IMR-90 (cell line): ENCODE measurements at regions of chr4 and their contacts with region 1.

Region 1: GRCh38 chr4:126386512-126386911 is 1071.8 kb downstream of the FAT4 start:
- DNase-seq: no peak
- ATAC-seq: no peak
- H3K4me3 ChIP-seq: no peak overlapping the region
- H3K27ac ChIP-seq: no peak overlapping the region
- H3K4me1 ChIP-seq: no peaks in the 10 kb centered on the region
- H3K27me3 ChIP-seq: no peaks in the 10 kb centered on the region
- CTCF ChIP-seq: no peak
- POLR2A ChIP-seq: no peak
- RAD21 ChIP-seq: no peak

Region 2: DNA sequence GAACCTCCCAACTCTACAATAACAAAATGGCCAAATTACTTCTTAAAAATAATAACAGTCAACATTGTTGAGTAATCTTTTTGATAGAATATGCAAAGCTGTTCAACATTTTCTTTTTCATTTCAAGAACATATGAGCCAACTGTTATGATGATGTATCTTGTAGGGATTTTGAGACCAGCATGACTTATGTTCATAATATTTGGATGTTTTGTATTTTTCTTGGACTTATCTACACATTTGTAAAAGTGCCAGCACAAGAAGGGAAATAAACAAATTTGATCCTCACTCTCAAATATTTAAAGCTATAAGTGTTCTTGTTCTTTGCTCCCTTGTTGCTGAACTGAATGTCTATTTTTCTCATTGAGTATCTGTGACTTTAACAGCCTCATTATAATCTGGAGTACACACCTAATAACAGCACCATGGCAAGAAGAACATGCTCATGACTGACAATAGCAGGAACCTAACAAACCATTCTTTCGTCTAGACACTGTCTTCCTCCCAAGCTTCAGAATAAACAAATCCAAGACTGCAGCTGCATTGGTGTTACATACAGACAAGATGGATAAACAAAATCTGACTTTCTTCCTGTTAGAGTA is 22.1 kb before region 1 on chr4:
- CTCF ChIA-PET with region 1: no interaction called
- POLR2A ChIA-PET with region 1: no interaction called
- dilution Hi-C with region 1: no loop called
- in situ Hi-C with region 1: no loop called
- intact Hi-C with region 1: loop called (anchors 1 kb)
- DNase-seq: peak; percentile 77
- ATAC-seq: peak; percentile 78
- H3K4me3 ChIP-seq: no peak overlapping the region
- H3K27ac ChIP-seq: no peak overlapping the region
- H3K4me1 ChIP-seq: no peaks in the 10 kb centered on the region; the same call in 1 of the 2 replicates
- H3K27me3 ChIP-seq: no peaks in the 10 kb centered on the region
- CTCF ChIP-seq: no peak
- POLR2A ChIP-seq: no peak
- RAD21 ChIP-seq: no peak